ENCODE measurements at regions of chr16 and their contacts with region 1.

Region 1: DNA sequence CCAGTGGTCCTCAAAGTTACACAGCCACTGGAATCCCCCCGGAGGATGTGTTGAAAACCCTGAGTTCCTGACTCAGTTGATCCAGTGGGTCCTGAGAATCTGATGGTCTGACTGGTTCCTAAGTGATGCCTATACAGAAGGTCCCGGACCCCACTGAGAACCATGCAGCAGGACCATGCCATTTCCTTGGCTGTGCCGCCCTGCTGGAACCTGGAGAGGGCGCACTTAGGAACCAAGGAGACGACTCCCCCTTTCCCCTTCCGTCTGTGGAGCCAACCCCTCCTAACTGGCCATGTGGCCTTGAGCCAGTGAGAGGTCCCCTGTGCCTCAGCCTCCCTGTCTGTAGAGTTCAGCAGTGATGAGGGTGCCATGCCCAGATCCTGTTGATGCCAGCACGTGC is 22.0 kb downstream of the C16orf74 start:
- DNase-seq: no peak
- ATAC-seq: no peak
- H3K4me3 ChIP-seq: no peak overlapping the region
- H3K27ac ChIP-seq: no peak overlapping the region
- H3K4me1 ChIP-seq: no peaks in the 10 kb centered on the region
- H3K27me3 ChIP-seq: no peaks in the 10 kb centered on the region

Region 2: GRCh38 chr16:85004559-85005205 is 724.2 kb before region 1 on chr16:
- intact Hi-C with region 1: loop called in 1 of 4 experiments (anchors 5 kb)
- DNase-seq: no peak
- ATAC-seq: peak; percentile 38 to 40
- H3K4me3 ChIP-seq: no peak overlapping the region
- H3K27ac ChIP-seq: peak overlapping the region; percentile 48
- H3K4me1 ChIP-seq: peaks cover 30% of the 10 kb centered on the region
- H3K27me3 ChIP-seq: no peaks in the 10 kb centered on the region

Region 3: GRCh38 chr16:85253084-85253941 is 475.6 kb before region 1 on chr16:
- intact Hi-C with region 1: loop called in 1 of 4 experiments (anchors 10 kb)
- DNase-seq: peak; percentile 53 to 86 (median 80)
- ATAC-seq: peak; percentile 64 to 72
- H3K4me3 ChIP-seq: no peak overlapping the region
- H3K27ac ChIP-seq: no peak overlapping the region
- H3K4me1 ChIP-seq: no peaks in the 10 kb centered on the region
- H3K27me3 ChIP-seq: no peaks in the 10 kb centered on the region

Region 4: GRCh38 chr16:85663891-85664321 is 65.0 kb before region 1 on chr16:
- intact Hi-C with region 1: no loop called
- DNase-seq: peak in 2 of 3 donors; percentile 71 to 74
- ATAC-seq: no peak
- H3K4me3 ChIP-seq: no peak overlapping the region
- H3K27ac ChIP-seq: no peak overlapping the region
- H3K4me1 ChIP-seq: no peaks in the 10 kb centered on the region
- H3K27me3 ChIP-seq: no peaks in the 10 kb centered on the region

Region 5: GRCh38 chr16:86181526-86181925 is 452.6 kb after region 1 on chr16:
- intact Hi-C with region 1: no loop called
- DNase-seq: no peak
- ATAC-seq: no peak
- H3K4me3 ChIP-seq: no peak overlapping the region
- H3K27ac ChIP-seq: no peak overlapping the region
- H3K4me1 ChIP-seq: no peaks in the 10 kb centered on the region
- H3K27me3 ChIP-seq: no peaks in the 10 kb centered on the region

Measured in right cardiac atrium (tissue), 5 donors.